ENCODE measurements at regions of chr7 and their contacts with region 1.

Region 1: GRCh38 chr7:128209229-128210035 is 31.6 kb upstream of the LEP start:
- DNase-seq: peak; percentile 53 to 82
- H3K4me3 ChIP-seq: no peak overlapping the region
- H3K27ac ChIP-seq: no peak overlapping the region
- H3K4me1 ChIP-seq: peaks cover 6 to 16% (median 7%) of the 10 kb centered on the region in 4 experiments; a peak in 6 of 7 replicates
- H3K27me3 ChIP-seq: peaks cover 0 to 10% (median 5%) of the 10 kb centered on the region in 4 experiments; a peak in 3 of 7 replicates
- CTCF ChIP-seq: peak; percentile 99 to 100 (median 100)
- EP300 ChIP-seq: no peak
- POLR2A ChIP-seq: no peak
- RAD21 ChIP-seq: peak; percentile 100

Region 2: DNA sequence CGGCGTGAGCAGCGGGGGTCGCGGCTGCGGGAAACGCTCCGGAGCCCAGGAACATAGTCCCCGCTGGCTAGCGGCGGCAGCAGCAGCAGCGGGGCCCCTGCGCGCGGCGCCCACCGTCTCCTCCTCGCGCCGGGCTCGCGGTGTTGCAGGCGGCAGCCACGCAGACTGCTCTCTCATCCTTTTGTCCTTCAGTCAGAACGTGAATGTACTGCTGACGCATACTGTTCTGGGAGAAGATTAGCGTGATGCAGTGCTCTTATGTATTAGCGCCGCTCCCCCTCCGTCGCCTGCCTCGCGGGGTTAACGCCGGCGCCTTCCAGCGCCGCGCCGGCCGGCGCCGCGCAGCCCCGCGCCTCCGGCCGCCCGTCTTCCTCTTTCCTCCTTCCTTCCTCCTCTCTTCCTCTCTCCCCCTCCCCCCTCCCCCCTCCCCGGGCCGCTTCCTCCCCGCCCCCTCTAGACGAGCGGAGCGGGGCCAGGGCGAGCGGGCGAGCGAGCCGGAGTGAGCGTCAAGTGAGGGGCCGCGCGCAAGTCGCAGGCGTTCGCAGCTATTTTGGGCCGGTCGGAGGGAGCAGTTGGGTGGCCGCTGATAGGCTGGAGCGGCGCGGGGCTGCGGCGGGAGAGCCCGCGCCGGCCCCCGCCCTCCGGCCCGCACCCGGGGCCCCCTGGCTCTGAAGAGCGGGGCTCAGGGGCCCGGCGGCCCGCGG is 177.4 kb before region 1 on chr7:
- CTCF ChIA-PET with region 1: interaction called, 165 read pairs
- POLR2A ChIA-PET with region 1: interaction called, 3 read pairs
- DNase-seq: peak in 1 of 2 experiments; percentile 67
- H3K4me3 ChIP-seq: peak overlapping the region; percentile 53 to 74 (median 58)
- H3K27ac ChIP-seq: no peak overlapping the region
- H3K4me1 ChIP-seq: peaks cover 0 to 24% (median 14%) of the 10 kb centered on the region in 4 experiments; a peak in 5 of 7 replicates
- H3K27me3 ChIP-seq: peaks cover 0 to 25% (median 10%) of the 10 kb centered on the region in 4 experiments; a peak in 5 of 7 replicates
- CTCF ChIP-seq: peak in 1 of 3 experiments; percentile 9; a peak in 1 of 4 replicates
- EP300 ChIP-seq: no peak
- POLR2A ChIP-seq: no peak; a peak in 1 of 3 replicates
- RAD21 ChIP-seq: peak in 1 of 2 experiments; percentile 16; a peak in 1 of 4 replicates

Region 3: GRCh38 chr7:128104035-128104742 is 105.2 kb before region 1 on chr7:
- CTCF ChIA-PET with region 1: interaction called, 221 read pairs
- POLR2A ChIA-PET with region 1: interaction called, 6 read pairs
- DNase-seq: no peak
- H3K4me3 ChIP-seq: peak overlapping the region; percentile 29 to 61 (median 42)
- H3K27ac ChIP-seq: no peak overlapping the region
- H3K4me1 ChIP-seq: no peaks in the 10 kb centered on the region; a peak in 4 of 7 replicates
- H3K27me3 ChIP-seq: peaks cover 13 to 39% (median 28%) of the 10 kb centered on the region in 4 experiments
- CTCF ChIP-seq: no peak
- EP300 ChIP-seq: no peak
- POLR2A ChIP-seq: no peak; a peak in 1 of 3 replicates
- RAD21 ChIP-seq: no peak; a peak in 1 of 4 replicates

Region 4: GRCh38 chr7:128135515-128136214 is 73.8 kb before region 1 on chr7:
- CTCF ChIA-PET with region 1: interaction called, 347 read pairs
- POLR2A ChIA-PET with region 1: interaction called, 4 read pairs
- DNase-seq: peak in 1 of 2 experiments; percentile 85
- H3K4me3 ChIP-seq: peak overlapping the region; percentile 48 to 82 (median 58)
- H3K27ac ChIP-seq: no peak overlapping the region
- H3K4me1 ChIP-seq: peaks cover 0 to 4% (median 2%) of the 10 kb centered on the region in 4 experiments; a peak in 2 of 7 replicates
- H3K27me3 ChIP-seq: peaks cover 10 to 38% (median 29%) of the 10 kb centered on the region in 4 experiments
- CTCF ChIP-seq: peak; percentile 79 to 84 (median 83)
- EP300 ChIP-seq: peak in 1 of 2 experiments; percentile 94; a peak in 2 of 3 replicates
- POLR2A ChIP-seq: no peak
- RAD21 ChIP-seq: peak; percentile 41 to 80; a peak in 3 of 4 replicates

Region 5: DNA sequence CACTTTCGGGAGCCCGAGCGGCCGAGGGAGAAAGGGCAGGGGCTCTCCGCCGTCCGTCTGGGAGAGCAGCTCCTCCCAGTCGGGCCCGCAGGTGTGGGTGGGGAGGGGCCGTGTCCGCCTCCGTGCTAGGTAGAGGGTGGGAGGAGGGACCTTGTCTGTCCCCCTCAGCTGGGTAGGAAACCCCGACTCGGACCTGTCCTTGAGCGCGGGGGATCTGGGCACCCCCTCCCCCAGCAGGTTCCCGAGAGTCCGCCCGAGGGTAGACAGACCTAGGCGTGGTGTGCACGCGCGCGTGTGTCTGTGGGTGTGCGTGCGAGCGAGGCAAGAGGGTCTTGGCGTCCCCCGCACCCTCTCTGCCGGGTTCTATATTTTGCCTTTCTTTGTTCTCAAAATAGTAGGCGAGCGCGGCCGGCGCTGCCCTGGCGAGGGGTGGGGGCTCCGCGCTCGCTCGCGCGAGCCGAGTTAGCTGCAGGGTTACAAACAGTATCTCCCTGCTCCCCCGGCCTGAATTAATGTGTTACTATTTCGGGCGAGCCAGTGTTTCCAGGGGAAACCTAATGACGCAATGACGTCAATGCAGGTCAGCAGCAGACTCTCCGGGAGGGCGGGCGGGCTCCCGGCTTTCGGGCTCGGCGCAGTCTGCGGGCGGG is 42.3 kb before region 1 on chr7:
- CTCF ChIA-PET with region 1: interaction called, 131 read pairs
- POLR2A ChIA-PET with region 1: no interaction called
- DNase-seq: no peak
- H3K4me3 ChIP-seq: peak overlapping the region; percentile 31 to 87 (median 70)
- H3K27ac ChIP-seq: no peak overlapping the region
- H3K4me1 ChIP-seq: peaks cover 6 to 31% (median 20%) of the 10 kb centered on the region in 4 experiments
- H3K27me3 ChIP-seq: peaks cover 37 to 83% (median 67%) of the 10 kb centered on the region in 4 experiments
- CTCF ChIP-seq: no peak
- EP300 ChIP-seq: no peak
- POLR2A ChIP-seq: no peak
- RAD21 ChIP-seq: no peak

Region 6: DNA sequence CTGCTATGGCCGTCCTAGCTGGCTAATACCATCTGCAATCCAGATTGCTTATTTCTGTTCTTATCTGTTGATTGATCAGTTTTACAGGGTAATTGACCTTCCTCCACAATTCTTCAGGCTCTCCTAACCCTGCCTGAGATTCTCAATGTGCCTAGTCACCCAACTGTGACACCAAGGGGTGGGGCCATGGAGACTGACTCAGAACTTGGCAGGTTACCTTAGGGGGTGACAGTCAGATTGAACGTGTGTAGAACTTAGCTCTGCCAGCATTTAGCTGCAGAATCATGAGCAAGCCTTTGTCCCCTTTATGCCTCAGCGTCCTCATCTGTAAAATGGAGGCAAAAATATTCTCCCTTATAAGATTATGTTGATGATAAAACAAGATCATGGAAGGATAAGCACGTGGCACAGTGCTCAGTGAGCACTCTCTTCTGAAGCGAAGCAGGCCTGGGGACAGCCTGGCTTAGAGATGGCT is 12.5 kb after region 1 on chr7:
- CTCF ChIA-PET with region 1: interaction called, 103 read pairs
- POLR2A ChIA-PET with region 1: no interaction called
- DNase-seq: no peak
- H3K4me3 ChIP-seq: no peak overlapping the region
- H3K27ac ChIP-seq: no peak overlapping the region
- H3K4me1 ChIP-seq: no peaks in the 10 kb centered on the region
- H3K27me3 ChIP-seq: no peaks in the 10 kb centered on the region; a peak in 1 of 7 replicates
- CTCF ChIP-seq: no peak
- EP300 ChIP-seq: no peak
- POLR2A ChIP-seq: no peak
- RAD21 ChIP-seq: no peak

Region 7: GRCh38 chr7:128409596-128410160 is 200.2 kb after region 1 on chr7 and contains the start of gene IMPDH1:
- CTCF ChIA-PET with region 1: no interaction called
- POLR2A ChIA-PET with region 1: no interaction called
- DNase-seq: peak in 1 of 2 experiments; percentile 97
- H3K4me3 ChIP-seq: peak within 1 kb of the TSS; percentile 52 to 78 (median 64)
- H3K27ac ChIP-seq: no peak within 1 kb of the TSS
- H3K4me1 ChIP-seq: peaks cover 0 to 30% (median 23%) of the 10 kb centered on the region in 4 experiments; a peak in 6 of 7 replicates
- H3K27me3 ChIP-seq: peaks cover 33 to 73% (median 53%) of the 10 kb centered on the region in 4 experiments
- CTCF ChIP-seq: no peak
- EP300 ChIP-seq: no peak
- POLR2A ChIP-seq: peak in 1 of 2 experiments; percentile 51; a peak in 1 of 3 replicates
- RAD21 ChIP-seq: no peak
- total RNA-seq, gene IMPDH1: 44.0 and 45.8 TPM in 2 replicates

Measured in H1 (cell line).